ENCODE measurements at regions of chr6 and their contacts with region 1.

Region 1: GRCh38 chr6:157314705-157315321 is 8.5 kb downstream of the TMEM242 start:
- DNase-seq: peak; percentile 59
- H3K4me3 ChIP-seq: no peak overlapping the region
- H3K27ac ChIP-seq: no peak overlapping the region
- H3K4me1 ChIP-seq: peaks cover 14% of the 10 kb centered on the region
- H3K27me3 ChIP-seq: no peaks in the 10 kb centered on the region
- CTCF ChIP-seq: peak; percentile 88 to 93

Region 2: DNA sequence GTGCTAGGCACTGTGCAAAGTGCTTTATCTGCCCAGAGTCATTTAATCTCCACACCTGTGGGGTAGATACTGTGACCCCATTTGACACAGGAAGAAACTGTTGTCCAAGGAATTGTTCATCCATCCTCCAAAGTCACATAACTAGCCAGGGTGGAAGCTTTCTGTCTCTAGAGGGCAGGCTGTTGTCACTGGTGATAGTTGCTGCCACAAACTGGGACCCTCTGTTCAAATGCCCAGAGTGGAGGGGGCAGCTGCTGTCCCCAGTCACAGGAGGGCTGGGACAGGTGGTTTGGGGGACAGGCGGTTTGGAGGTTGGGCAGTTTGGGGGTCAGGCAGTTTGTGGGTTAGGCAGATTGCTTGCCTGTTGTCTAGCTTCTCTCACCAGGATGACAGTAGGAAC is 24.6 kb after region 1 on chr6:
- CTCF ChIA-PET with region 1: no interaction called
- dilution Hi-C with region 1: no loop called
- in situ Hi-C with region 1: no loop called
- intact Hi-C with region 1: loop called (anchors 1 kb)
- DNase-seq: no peak
- H3K4me3 ChIP-seq: no peak overlapping the region
- H3K27ac ChIP-seq: no peak overlapping the region
- H3K4me1 ChIP-seq: peaks cover 4% of the 10 kb centered on the region
- H3K27me3 ChIP-seq: no peaks in the 10 kb centered on the region
- CTCF ChIP-seq: peak in 1 of 2 donors; percentile 20

Region 3: DNA sequence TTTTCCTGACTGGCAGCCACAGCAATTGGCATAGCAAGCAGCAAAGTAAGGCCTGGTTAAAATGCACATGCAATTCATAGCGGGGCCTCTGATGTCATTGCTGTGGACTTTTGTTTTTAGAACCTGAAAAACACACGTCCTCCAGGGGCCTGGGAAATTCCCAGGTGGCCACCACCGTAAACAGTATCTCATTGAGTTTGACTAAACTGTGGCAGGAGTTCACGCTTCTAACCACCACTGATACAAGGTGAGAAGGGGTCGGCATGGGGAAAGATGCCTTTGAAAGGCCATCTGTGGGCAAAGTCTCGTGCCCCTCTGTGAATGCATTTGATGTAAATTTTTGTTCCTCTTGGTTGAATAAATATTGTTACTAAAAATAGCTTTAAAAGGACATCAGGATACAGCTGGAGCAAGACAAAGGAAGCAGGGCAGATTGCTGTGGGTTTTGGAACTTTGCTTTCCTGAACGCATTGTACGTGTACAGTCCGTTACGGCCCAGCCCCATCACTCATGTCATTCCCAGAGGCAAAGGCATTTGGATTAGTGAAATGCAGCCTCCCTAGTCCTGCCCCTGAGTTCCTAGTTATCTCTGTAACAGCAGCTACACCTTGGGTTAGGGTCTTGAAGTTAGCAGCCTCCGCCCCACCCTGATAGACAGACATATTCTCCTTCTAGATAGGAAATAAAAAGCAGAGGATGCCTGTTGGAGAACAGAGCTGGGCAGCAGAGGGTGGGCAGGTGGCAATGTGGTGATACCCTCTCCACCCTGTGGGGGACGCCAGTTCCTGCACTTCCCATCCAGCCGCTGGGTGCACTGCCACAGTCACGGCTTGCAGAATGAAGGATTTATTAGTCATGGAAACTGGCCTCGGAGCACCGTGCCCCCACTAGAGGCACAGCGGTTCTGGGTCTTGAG is 146.4 kb after region 1 on chr6:
- CTCF ChIA-PET with region 1: no interaction called
- dilution Hi-C with region 1: no loop called
- in situ Hi-C with region 1: no loop called
- intact Hi-C with region 1: loop called (anchors 10 kb)
- DNase-seq: no peak
- H3K4me3 ChIP-seq: no peak overlapping the region
- H3K27ac ChIP-seq: no peak overlapping the region
- H3K4me1 ChIP-seq: peaks cover 3% of the 10 kb centered on the region
- H3K27me3 ChIP-seq: peaks cover 3% of the 10 kb centered on the region
- CTCF ChIP-seq: no peak

Region 4: GRCh38 chr6:157667211-157668008 is 352.6 kb after region 1 on chr6:
- CTCF ChIA-PET with region 1: interaction called, 3 read pairs
- dilution Hi-C with region 1: no loop called
- in situ Hi-C with region 1: no loop called
- intact Hi-C with region 1: loop called (anchors 1 kb)
- DNase-seq: peak; percentile 32
- H3K4me3 ChIP-seq: no peak overlapping the region
- H3K27ac ChIP-seq: no peak overlapping the region
- H3K4me1 ChIP-seq: peaks cover 8% of the 10 kb centered on the region
- H3K27me3 ChIP-seq: no peaks in the 10 kb centered on the region
- CTCF ChIP-seq: peak; percentile 76 to 94

Region 5: GRCh38 chr6:158571826-158572652 is 1257.2 kb after region 1 on chr6:
- CTCF ChIA-PET with region 1: interaction called, 16 read pairs
- dilution Hi-C with region 1: no loop called
- in situ Hi-C with region 1: no loop called
- intact Hi-C with region 1: no loop called
- DNase-seq: no peak
- H3K4me3 ChIP-seq: no peak overlapping the region
- H3K27ac ChIP-seq: no peak overlapping the region
- H3K4me1 ChIP-seq: peaks cover 15% of the 10 kb centered on the region
- H3K27me3 ChIP-seq: no peaks in the 10 kb centered on the region
- CTCF ChIP-seq: no peak